ENCODE measurements at regions of chr9 and their contacts with region 1.

Region 1: DNA sequence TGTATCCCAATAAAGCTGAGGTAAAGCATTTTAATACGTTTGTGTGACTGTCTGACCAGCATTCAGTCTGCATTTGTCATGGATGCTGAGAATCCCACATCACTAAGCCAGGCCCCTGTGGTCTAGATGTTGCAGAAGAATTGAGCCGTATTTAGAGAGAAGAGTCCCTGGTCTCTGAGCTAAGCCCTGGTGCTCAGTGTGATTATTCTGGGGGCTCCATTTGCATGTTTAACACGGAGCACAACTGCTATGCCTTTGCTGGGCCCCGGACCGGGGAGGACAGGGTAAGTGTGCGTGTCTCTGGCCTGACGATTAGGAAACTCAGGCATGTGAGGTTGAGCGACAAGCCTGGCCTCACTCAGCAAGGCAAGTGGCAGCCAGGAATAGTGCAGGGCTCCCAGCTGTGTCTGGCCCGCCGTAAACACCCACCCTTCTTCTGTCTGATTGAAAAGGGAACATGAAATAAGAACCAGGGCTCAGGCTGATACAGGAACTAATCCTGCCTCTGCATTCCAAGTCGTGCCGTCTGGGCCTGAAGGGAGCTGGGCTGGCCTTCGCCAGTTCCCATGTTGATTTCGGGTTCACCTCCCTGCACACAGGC is 22.3 kb downstream of the FAM78A start:
- DNase-seq: peak in 2 of 3 donors; percentile 76 to 80
- H3K4me3 ChIP-seq: peak overlapping the region in 2 of 7 experiments; percentile 11 to 22
- H3K27ac ChIP-seq: peak overlapping the region in 1 of 2 experiments; percentile 58
- H3K4me1 ChIP-seq: peaks cover 8 to 77% (median 75%) of the 10 kb centered on the region in 4 experiments
- H3K27me3 ChIP-seq: no peaks in the 10 kb centered on the region

Region 2: DNA sequence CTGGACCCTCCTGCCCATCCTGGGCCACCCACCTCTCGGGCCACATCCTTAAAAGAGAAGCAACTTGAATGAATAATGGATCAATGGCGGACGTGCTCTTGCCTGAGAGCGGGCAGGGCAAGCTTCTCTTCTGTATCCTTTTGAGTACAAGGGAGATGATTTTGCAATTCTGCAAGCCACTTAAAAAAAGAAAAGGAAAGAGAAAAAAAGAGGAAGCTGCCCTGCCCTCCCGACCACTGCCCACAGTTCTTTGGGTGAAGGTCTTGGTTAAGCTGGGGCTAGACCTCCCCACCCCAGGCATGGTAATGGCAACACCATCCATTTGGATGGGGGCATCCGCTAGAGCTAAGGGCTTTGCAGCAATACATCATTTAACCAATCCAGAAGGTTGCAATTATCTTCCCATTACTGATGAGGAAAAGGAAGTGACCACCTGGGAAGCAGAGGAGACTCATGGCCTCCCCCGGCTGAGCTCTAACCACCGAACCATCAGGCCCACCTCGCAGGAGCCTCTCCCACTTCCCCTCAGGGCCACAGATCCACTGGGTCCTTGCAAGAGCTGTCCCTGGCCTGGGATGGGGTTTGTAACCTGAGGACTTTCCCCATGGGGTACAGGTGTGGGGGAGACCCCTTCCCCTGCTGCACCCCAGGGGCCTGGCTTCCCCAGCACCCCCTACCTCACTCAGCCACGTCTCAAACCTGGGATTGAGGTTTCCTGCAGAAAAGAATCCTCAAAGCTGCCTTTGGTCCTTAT is 272.8 kb before region 1 on chr9:
- CTCF ChIA-PET with region 1: no interaction called
- POLR2A ChIA-PET with region 1: no interaction called
- DNase-seq: peak; percentile 64 to 92 (median 90)
- H3K4me3 ChIP-seq: peak overlapping the region in 3 of 7 experiments; percentile 19 to 38 (median 24)
- H3K27ac ChIP-seq: no peak overlapping the region
- H3K4me1 ChIP-seq: peaks cover 0 to 24% (median 15%) of the 10 kb centered on the region in 4 experiments
- H3K27me3 ChIP-seq: no peaks in the 10 kb centered on the region

Region 3: GRCh38 chr9:131237931-131238401 is 16.0 kb before region 1 on chr9:
- CTCF ChIA-PET with region 1: interaction called, 26 read pairs
- POLR2A ChIA-PET with region 1: interaction called, 20 read pairs
- DNase-seq: peak; percentile 83 to 95 (median 95)
- H3K4me3 ChIP-seq: peak overlapping the region in 6 of 7 experiments; percentile 13 to 60 (median 49)
- H3K27ac ChIP-seq: peak overlapping the region; percentile 59 to 81
- H3K4me1 ChIP-seq: peaks cover 12 to 59% (median 53%) of the 10 kb centered on the region in 4 experiments
- H3K27me3 ChIP-seq: no peaks in the 10 kb centered on the region

Region 4: DNA sequence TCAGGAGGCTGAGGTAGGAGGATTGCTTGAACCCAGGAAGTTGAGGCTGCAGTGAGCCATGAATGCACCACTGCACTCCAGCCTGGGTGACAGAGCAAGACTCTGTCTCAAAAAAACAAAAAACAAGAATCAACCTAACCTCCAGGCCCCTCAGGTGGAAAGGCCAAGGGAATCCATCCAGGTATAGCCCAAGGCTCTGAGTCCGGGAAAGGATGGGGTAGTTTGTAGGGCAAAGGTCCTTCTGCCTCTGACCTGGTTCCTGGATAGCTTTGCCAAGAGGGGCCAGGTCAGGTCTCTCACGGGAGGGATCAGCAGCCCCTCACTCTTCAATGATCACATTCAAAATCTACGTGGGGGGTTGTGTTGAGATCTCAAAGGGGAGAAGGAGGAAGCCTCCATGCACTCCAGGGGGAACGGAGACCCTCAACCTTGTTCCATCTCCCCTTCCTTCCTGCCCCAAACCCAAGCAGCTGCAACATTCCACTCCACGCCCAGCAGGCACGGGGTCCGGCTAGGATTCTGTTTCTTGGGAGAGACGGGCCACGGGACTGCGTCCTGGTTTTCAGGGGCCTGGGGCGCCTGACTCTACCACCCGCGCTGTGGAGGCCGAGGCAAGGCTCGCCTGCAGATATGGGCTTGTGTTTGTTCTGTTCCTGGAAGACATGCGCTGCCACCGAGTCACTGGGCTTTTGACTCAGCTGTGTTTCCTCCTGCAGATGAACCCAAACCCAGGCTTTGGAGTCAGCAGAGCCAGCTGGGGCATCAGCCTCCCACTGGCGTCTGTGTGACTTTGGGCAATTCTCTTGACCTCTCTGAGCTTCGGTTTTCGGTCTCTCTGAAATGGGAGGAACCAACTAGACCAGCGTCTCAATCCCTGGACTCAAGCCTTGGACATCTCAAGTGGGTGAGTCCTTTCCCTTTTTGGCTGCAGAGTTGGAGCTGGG is 71.0 kb after region 1 on chr9:
- CTCF ChIA-PET with region 1: no interaction called
- POLR2A ChIA-PET with region 1: no interaction called
- DNase-seq: no peak
- H3K4me3 ChIP-seq: no peak overlapping the region
- H3K27ac ChIP-seq: no peak overlapping the region
- H3K4me1 ChIP-seq: peaks cover 0 to 7% (median 5%) of the 10 kb centered on the region in 4 experiments
- H3K27me3 ChIP-seq: no peaks in the 10 kb centered on the region

Measured in common myeloid progenitor, CD34-positive (primary cell).